GM12878 (cell line): ENCODE measurements at regions of chr6 and their contacts with region 1.

Region 1: GRCh38 chr6:42175860-42176259 is 2.7 kb downstream of the GUCA1A start:
- DNase-seq: no peak
- ATAC-seq: no peak
- H3K4me3 ChIP-seq: no peak overlapping the region
- H3K27ac ChIP-seq: no peak overlapping the region
- H3K4me1 ChIP-seq: no peaks in the 10 kb centered on the region
- H3K27me3 ChIP-seq: no peaks in the 10 kb centered on the region
- CTCF ChIP-seq: 0 out of 6 replicates have a peak, but pooled peaks of 2 of the 3 experiments have one; percentile 2 to 10
- EP300 ChIP-seq: no peak
- POLR2A ChIP-seq: no peak
- RAD21 ChIP-seq: no peak

Region 2: DNA sequence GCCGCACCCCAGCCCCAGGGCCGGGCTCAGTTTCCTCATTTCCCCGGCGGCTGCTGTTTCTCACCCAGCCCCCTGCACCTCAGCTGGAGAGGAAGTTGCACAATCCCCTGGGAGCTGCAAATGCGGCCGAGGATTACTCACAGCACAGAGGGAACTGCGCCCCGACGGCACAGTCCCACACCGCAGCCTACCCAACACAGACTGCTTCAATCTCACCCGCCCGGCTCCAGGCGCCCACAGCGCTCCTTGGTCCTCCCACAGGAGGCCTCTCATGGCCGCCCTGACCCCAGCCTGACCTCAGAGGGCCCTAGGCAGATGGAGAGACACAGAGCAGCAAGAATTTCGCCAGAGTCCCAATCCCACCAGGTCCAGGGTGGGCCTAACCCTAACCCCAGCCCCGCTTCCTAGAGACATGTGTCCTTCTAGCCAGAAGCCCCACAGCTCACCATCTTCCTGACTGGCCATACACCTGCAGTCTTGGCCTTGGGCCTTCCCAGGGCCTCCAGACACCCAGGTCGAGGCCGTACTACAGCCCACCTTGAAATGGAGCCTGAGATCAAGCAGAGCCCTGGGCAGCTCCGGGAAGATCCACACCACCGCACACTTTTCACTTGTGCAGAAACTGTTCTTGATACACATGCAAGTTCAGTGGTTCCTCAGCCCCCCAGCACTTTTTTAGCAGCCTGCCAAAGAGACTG is 452.2 kb before region 1 on chr6:
- CTCF ChIA-PET with region 1: no interaction called
- POLR2A ChIA-PET with region 1: no interaction called
- RAD21 ChIA-PET with region 1: no interaction called
- SMC1A ChIA-PET with region 1: no interaction called
- in situ Hi-C with region 1: no loop called
- intact Hi-C with region 1: no loop called
- DNase-seq: no peak
- ATAC-seq: peak; percentile 82
- H3K4me3 ChIP-seq: peak overlapping the region; percentile 81
- H3K27ac ChIP-seq: peak overlapping the region; percentile 97
- H3K4me1 ChIP-seq: peaks cover 75% of the 10 kb centered on the region
- H3K27me3 ChIP-seq: no peaks in the 10 kb centered on the region
- CTCF ChIP-seq: no peak
- EP300 ChIP-seq: peak; percentile 41 to 60; a peak in 2 of 4 replicates
- POLR2A ChIP-seq: peak; percentile 90
- RAD21 ChIP-seq: no peak; the same call in 1 of the 2 replicates

Region 3: DNA sequence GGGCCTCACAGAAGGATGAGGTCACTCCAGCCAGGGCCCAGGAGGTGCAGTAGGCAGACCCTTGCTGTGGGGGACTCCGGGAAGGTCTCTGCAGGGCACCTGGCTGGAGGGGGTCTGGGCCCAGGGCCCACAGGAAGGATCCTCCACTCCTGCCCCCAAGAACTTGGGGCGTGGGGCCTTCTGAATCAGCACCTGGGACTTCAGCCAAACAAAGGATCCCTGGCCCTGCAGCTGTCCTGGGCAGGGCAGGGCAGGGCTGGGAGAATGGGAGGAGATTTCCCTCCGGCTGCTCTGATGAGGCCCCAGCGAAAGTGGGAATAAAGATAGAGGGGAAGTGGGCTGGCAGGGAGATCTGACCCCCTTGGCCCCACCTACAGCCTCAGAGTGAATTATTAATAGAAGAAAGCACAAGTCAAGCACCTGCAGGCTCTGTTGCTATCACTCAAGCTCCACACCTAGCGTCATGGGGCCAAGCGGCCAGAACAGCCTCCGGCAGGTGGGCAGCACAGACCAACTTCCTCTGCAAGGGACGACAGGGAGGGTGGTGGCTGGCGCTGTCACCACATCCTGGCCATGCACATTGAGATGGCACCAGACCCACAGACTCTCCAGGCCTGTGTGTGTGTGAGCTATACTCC is 103.4 kb after region 1 on chr6:
- CTCF ChIA-PET with region 1: no interaction called
- POLR2A ChIA-PET with region 1: interaction called, 10 read pairs
- RAD21 ChIA-PET with region 1: no interaction called
- SMC1A ChIA-PET with region 1: no interaction called
- in situ Hi-C with region 1: no loop called
- intact Hi-C with region 1: no loop called
- DNase-seq: no peak
- ATAC-seq: peak; percentile 54
- H3K4me3 ChIP-seq: no peak overlapping the region
- H3K27ac ChIP-seq: peak overlapping the region; percentile 11; the same call in 1 of the 2 replicates
- H3K4me1 ChIP-seq: peaks cover 16% of the 10 kb centered on the region
- H3K27me3 ChIP-seq: no peaks in the 10 kb centered on the region; a peak in 1 of 4 replicates
- CTCF ChIP-seq: no peak
- EP300 ChIP-seq: no peak
- POLR2A ChIP-seq: no peak
- RAD21 ChIP-seq: no peak